Activated CD4-positive, alpha-beta memory T cell treated with anti-CD3 and anti-CD28 coated beads, Interleukin-2, amount 10 ng/mL, durations not matched to agents 7 days and 5 days (primary cell): ENCODE measurements at regions of chr2 and their contacts with region 1.

Region 1: DNA sequence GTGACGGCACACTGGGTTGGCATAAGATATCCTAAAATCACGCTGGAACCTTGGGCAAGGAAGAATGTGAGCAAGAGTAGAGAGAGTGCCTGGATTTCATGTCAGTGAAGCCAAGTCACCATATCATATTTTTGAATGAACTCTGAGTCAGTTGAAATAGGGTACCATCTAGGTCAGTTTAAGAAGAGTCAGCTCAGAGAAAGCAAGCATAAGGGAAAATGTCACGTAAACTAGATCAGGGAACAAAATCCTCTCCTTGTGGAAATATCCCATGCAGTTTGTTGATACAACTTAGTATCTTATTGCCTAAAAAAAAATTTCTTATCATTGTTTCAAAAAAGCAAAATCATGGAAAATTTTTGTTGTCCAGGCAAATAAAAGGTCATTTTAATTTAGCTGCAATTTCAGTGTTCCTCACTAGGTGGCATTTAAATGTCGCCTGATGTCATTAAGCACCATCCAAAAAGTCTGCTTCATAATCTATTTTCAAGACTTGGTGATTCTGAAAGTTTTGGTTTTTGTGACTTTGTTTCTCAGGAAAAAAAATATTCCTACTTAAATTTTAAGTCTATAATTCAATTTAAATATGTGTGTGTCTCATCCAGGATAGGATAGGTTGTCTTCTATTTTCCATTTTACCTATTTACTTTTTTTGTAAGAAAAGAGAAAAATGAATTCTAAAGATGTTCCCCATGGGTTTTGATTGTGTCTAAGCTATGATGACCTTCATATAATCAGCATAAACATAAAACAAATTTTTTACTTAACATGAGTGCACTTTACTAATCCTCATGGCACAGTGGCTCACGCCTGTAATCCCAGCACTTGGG is 19.6 kb downstream of the RSAD2 start:
- DNase-seq: no peak
- H3K4me3 Mint-ChIP-seq: no peak overlapping the region
- H3K27ac Mint-ChIP-seq: no peak overlapping the region
- H3K4me1 Mint-ChIP-seq: peaks cover 4% of the 10 kb centered on the region
- H3K27me3 Mint-ChIP-seq: peaks cover 4% of the 10 kb centered on the region

Region 2: DNA sequence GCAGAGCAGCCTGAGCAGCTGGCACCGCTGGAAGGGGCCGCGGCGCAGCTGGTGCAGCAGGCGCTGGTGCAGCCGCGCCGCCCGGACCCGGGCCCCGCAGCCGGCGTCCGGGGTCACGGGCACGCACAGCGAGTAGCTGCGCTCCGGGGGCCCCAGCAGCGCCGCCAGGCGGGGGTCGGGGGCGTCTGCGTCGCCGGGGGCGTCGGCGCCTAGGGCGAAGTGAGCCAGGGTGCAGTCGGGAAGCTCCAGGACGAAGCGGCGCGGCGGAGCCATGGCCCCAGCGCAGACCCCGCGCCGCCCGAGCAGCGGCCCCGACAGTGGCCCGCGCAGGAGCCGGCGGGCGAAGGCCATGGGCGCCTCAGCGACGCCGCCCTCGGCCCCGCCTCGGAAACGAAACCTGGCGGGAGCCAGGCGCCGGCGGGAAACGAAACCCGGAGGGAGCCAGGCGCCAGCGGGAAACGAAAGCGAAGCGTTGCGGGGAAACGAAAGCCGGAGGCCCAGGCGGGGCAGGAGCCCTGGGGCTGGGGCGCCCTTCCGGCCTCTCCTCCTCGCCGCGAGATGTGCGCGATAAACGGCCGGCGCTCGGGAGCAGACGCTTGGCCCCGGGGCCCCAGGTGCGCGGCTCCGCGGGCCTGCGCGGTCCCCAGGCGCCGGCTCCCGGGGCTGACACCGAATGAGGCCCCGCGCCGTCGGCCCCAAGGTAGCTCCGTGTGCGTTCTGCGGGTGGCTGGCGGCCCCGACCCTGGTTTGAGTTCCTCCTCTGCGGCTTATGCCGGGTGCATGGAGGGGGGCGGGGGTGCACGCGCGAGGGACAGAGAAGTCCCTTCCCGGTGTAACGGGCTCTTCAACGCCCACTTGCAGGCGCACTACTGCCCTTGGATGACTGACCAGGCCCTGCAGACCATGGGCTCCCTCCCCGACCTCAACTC is 31.5 kb before region 1 on chr2 and contains the start of gene CMPK2:
- CTCF ChIA-PET with region 1: interaction called, 7 read pairs
- POLR2A ChIA-PET with region 1: interaction called, 15 read pairs
- DNase-seq: peak; percentile 94
- H3K4me3 Mint-ChIP-seq: peak within 1 kb of the TSS; percentile 97
- H3K27ac Mint-ChIP-seq: peak within 1 kb of the TSS; percentile 99
- H3K4me1 Mint-ChIP-seq: peaks cover 55% of the 10 kb centered on the region
- H3K27me3 Mint-ChIP-seq: no peaks in the 10 kb centered on the region
- total RNA-seq, gene CMPK2: 84.8 to 91.1 TPM

Region 3: GRCh38 chr2:6909431-6910385 is 12.6 kb after region 1 on chr2:
- CTCF ChIA-PET with region 1: interaction called, 23 read pairs
- POLR2A ChIA-PET with region 1: interaction called, 6 read pairs
- DNase-seq: peak; percentile 66
- H3K4me3 Mint-ChIP-seq: peak overlapping the region; percentile 25
- H3K27ac Mint-ChIP-seq: peak overlapping the region; percentile 67
- H3K4me1 Mint-ChIP-seq: peaks cover 81% of the 10 kb centered on the region
- H3K27me3 Mint-ChIP-seq: peaks cover 56% of the 10 kb centered on the region

Region 4: GRCh38 chr2:6917071-6917760 is 20.1 kb after region 1 on chr2 and contains the start of gene RNF144A:
- CTCF ChIA-PET with region 1: interaction called, 16 read pairs
- POLR2A ChIA-PET with region 1: interaction called, 8 read pairs
- DNase-seq: peak; percentile 72
- H3K4me3 Mint-ChIP-seq: peak within 1 kb of the TSS; percentile 60
- H3K27ac Mint-ChIP-seq: peak within 1 kb of the TSS; percentile 59
- H3K4me1 Mint-ChIP-seq: peaks cover 44% of the 10 kb centered on the region
- H3K27me3 Mint-ChIP-seq: peaks cover 40% of the 10 kb centered on the region
- total RNA-seq, gene RNF144A: 20.0 to 21.0 TPM

Region 5: GRCh38 chr2:7014174-7014640 is 117.1 kb after region 1 on chr2:
- CTCF ChIA-PET with region 1: interaction called, 25 read pairs
- POLR2A ChIA-PET with region 1: no interaction called
- DNase-seq: peak; percentile 22
- H3K4me3 Mint-ChIP-seq: no peak overlapping the region
- H3K27ac Mint-ChIP-seq: no peak overlapping the region
- H3K4me1 Mint-ChIP-seq: peaks cover 15% of the 10 kb centered on the region
- H3K27me3 Mint-ChIP-seq: no peaks in the 10 kb centered on the region

Region 6: DNA sequence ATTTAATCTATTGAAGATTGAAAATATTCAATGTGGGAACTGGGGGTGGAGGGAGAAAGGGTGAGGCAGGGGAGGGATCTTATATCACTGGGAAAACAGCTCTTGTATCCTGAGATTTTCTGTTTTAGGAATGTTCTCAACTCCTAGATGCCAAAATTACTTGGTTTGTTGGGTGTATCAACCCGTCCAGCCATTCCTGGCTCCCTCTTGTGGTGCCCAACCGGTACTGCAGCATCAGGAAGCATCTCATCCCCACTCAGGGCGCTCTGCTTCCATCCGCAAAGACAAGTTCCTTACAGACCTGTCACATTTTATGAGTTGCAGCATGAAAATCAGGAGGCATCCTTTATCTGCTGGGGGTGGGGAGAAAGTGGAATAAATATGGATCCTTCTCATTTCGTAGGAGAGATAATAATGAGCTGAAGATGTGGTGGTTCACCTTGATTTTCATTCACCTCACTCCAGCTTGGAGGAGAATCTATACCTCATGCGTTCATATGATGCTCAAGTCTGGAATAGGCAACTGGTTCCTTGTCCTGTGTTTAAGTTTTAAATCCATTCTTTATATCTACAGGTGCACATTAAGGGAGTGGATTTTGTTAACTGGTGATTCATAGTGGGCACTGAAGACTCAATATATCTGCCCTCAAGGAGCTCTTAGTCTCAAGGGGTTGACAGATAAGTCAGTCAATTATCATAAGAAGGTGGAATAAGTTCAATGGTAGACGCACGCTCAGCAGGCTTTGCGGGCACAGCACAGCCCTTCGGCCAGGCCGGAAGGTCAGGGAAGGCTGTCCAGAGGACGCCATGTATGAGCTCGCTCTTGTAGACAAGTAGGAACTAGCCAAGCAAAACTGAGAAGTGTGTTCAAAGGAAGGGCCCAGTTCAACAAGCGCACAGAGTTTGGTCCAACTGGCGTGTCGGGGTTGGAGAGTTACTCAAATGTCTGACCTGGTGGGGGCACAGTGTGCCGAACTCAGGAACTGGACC is 147.4 kb after region 1 on chr2:
- CTCF ChIA-PET with region 1: interaction called, 65 read pairs
- POLR2A ChIA-PET with region 1: interaction called, 3 read pairs
- DNase-seq: peak; percentile 62
- H3K4me3 Mint-ChIP-seq: no peak overlapping the region
- H3K27ac Mint-ChIP-seq: no peak overlapping the region
- H3K4me1 Mint-ChIP-seq: peaks cover 3% of the 10 kb centered on the region
- H3K27me3 Mint-ChIP-seq: no peaks in the 10 kb centered on the region